Right cardiac atrium (tissue), 5 donors: ENCODE measurements at regions of chr1 and their contacts with region 1.

Region 1: DNA sequence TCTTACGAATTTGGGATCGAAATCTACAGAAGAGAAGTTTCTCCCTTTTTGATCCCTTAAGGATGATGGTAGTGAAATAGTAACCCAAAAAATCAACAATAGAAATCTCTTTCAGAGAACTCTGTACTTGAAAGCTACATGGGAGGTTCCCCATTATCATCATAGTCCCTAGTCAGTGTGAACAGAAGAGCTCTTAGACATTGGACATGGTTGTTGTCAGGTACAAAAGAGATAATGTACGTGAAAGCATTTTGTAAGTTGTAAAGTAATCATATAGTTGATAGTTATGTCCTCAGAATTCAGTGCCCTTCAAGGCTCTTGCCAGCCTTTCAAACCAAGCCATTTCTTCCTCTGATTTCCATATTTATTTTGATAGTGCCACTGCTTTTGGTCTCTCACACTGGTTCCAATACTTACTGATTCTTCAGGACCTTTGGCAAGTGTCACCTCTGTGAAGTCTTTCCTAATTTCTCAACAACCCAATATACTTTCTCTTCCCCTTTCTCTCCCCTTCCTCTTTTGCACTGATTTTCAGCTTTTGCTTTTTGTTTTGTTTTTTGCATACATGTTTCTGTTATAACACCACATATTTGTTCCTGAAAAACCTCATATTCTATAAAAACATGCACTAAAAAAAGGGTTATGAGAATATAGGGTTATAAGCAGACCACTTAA is 22.4 kb downstream of the VPS45 start:
- DNase-seq: no peak
- ATAC-seq: no peak
- H3K4me3 ChIP-seq: no peak overlapping the region
- H3K27ac ChIP-seq: no peak overlapping the region
- H3K4me1 ChIP-seq: no peaks in the 10 kb centered on the region
- H3K27me3 ChIP-seq: no peaks in the 10 kb centered on the region

Region 2: DNA sequence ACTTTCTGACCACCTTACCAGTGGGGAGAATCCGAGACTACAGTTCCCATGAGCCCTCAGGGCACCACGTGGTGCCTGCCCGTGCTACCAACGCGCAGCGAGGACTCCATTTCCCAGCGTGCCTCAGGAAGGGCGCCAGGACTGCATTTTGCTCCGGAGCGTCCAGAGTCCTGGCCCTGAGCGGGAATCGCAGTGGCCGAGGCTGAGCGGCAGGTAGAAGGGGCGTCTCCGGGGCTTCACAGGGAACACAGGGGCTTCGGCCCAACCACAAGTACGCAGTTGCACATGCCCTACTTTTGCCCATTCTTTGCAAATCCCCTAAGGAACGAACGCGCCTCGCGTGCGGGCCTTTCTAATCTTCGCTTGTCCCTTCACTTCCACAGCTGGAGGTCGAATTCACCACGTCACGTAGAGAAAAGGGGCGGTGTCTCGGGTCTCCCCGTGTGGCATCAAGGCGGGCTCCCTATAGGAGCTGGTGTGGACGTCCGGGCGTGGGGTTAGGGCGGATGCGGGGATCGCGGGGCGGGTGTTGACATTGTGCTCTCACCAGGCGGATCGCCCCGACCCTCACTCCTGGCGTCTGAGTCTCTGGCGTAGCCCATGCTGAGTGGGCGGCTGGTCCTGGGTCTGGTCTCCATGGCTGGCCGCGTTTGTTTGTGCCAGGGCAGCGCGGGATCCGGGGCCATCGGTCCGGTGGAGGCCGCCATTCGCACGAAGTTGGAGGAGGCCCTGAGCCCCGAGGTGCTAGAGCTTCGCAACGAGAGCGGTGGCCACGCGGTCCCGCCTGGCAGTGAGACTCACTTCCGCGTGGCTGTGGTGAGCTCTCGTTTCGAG is 190.3 kb before region 1 on chr1 and contains the start of gene BOLA1:
- intact Hi-C with region 1: no loop called
- DNase-seq: peak; percentile 95 to 98 (median 97)
- ATAC-seq: peak; percentile 99
- H3K4me3 ChIP-seq: peak within 1 kb of the TSS; percentile 53
- H3K27ac ChIP-seq: peak within 1 kb of the TSS; percentile 87
- H3K4me1 ChIP-seq: peaks cover 6% of the 10 kb centered on the region
- H3K27me3 ChIP-seq: no peaks in the 10 kb centered on the region
- total RNA-seq, gene BOLA1: 13.0 to 23.8 (median 19.4) TPM

Region 3: DNA sequence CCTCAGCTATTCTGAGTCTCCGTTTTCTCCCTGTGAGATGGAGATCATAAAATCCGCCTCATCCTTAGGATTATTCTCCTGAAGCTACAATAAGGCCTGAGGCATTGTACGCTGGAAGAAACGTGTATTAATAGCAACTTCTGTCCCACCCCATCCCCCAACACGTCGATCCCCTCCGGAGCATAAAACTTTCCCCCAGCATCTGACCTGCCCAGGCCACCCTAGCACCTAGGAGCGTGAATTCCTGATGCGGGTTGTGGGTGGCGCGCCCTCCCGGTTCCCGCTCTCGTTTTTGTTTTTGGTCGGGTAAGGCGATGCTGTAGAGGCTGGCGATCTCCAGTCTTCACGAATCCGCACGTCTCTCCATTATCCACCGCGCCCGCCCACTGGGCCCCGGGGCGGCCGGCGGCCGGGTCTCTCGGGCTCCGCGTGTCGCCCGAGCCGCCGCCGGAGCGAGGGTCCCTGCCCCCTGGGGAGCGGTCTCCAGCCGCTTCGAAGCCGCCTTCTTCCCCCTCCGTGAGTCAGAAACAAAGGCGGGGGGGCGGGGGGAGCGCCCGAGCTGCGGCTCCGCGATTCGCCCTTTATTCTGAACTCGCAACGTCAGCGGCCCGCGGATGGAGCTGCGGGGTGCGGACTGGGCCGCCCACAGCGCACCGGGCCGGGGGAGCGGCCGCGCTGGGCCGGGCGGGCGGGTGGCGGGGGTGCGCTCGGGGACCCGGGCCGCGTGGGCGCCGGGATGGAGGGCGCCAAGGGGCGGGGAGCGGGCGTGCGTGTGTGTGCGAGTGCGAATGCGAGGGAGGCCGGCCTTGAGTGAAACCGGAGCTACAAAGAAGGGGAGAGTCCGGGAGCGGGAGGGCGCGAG is 59.5 kb after region 1 on chr1 and contains the start of gene PLEKHO1:
- intact Hi-C with region 1: loop called in 1 of 4 experiments (anchors 10 kb)
- DNase-seq: peak; percentile 88 to 95 (median 94)
- ATAC-seq: peak; percentile 81 to 84
- H3K4me3 ChIP-seq: peak within 1 kb of the TSS; percentile 97
- H3K27ac ChIP-seq: peak within 1 kb of the TSS; percentile 73
- H3K4me1 ChIP-seq: peaks cover 12% of the 10 kb centered on the region
- H3K27me3 ChIP-seq: no peaks in the 10 kb centered on the region
- total RNA-seq, gene PLEKHO1: 28.9 to 51.4 (median 34.4) TPM

Region 4: GRCh38 chr1:150235852-150236613 is 146.1 kb after region 1 on chr1 and contains the start of gene ANP32E:
- intact Hi-C with region 1: no loop called
- DNase-seq: peak; percentile 94 to 97 (median 97)
- ATAC-seq: peak; percentile 97 to 98
- H3K4me3 ChIP-seq: peak within 1 kb of the TSS; percentile 77
- H3K27ac ChIP-seq: peak within 1 kb of the TSS; percentile 85
- H3K4me1 ChIP-seq: peaks cover 2% of the 10 kb centered on the region
- H3K27me3 ChIP-seq: no peaks in the 10 kb centered on the region
- total RNA-seq, gene ANP32E: 27.7 to 36.3 (median 29.7) TPM